ENCODE measurements at regions of chr11 and their contacts with region 1.

Region 1: DNA sequence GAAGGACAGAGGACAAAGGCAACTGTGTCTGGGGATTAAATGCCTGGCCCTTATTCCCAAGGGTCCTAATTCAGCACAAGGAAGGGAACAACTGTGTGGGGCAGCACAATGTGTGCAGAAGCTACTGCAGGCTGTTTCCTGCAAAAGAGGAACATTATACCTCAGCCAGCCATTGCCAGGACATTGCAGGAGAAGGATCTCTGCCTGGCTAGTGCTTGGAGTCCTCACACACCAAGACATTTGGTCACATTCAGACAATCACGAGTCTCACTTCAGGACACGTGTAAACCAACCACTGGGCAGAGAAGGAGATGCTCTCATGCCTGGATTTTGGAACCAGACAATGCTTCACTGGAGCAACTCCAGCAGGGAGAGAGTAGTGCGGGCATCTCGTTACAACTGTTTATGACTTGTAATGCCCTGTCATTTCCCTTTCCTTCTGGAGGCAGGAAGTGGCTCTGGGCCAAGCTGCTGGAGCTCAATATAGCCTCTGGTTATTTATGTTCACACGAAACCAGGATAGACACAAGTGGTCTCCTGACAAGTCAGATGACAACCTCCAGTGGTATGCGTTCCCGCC is 23.9 kb upstream of the ZC3H12C start:
- DNase-seq: peak; percentile 70 to 91
- ATAC-seq: peak; percentile 94 to 97
- H3K4me3 ChIP-seq: peak overlapping the region in 2 of 4 donors; percentile 7 to 9
- H3K27ac ChIP-seq: peak overlapping the region; percentile 64 to 85 (median 78)
- H3K4me1 ChIP-seq: peaks cover 21% of the 10 kb centered on the region in 2 donors
- H3K27me3 ChIP-seq: no peaks in the 10 kb centered on the region
- CTCF ChIP-seq: no peak
- POLR2A ChIP-seq: peak in 1 of 2 donors; percentile 31

Region 2: GRCh38 chr11:109960831-109961230 is 108.4 kb before region 1 on chr11:
- in situ Hi-C with region 1: no loop called
- intact Hi-C with region 1: no loop called
- DNase-seq: peak; percentile 37 to 67
- ATAC-seq: peak; percentile 82 to 91
- H3K4me3 ChIP-seq: no peak overlapping the region
- H3K27ac ChIP-seq: peak overlapping the region in 1 of 4 donors; percentile 40
- H3K4me1 ChIP-seq: peaks cover 12 to 16% of the 10 kb centered on the region in 2 donors
- H3K27me3 ChIP-seq: no peaks in the 10 kb centered on the region
- CTCF ChIP-seq: no peak
- POLR2A ChIP-seq: no peak

Region 3: DNA sequence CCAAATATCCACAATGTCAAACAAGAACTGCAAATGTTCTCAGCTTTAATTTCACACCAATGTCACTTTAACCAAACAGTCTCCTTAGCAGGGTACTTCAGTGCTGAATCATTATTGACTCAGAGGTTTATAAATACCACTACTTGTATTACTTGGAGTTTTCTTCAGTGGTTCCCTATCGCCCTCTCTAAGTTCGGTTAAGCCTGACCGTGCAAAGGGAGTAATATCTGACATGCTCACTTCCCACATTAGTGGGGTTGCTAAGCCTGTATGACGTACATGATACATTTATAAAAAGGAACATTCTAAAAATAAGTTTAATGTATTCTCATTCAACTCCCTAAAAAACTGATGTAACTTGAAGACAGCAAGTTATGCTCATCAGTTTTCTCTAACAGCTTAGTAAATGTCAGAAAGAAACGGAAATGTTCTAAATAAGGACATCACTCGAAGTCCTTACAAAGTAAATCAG is 69.2 kb before region 1 on chr11:
- in situ Hi-C with region 1: no loop called
- intact Hi-C with region 1: loop called (anchors 5 kb)
- DNase-seq: peak in 1 of 2 donors; percentile 20
- ATAC-seq: peak; percentile 100
- H3K4me3 ChIP-seq: no peak overlapping the region
- H3K27ac ChIP-seq: peak overlapping the region; percentile 60 to 80 (median 75)
- H3K4me1 ChIP-seq: peaks cover 0 to 19% of the 10 kb centered on the region in 2 donors
- H3K27me3 ChIP-seq: no peaks in the 10 kb centered on the region
- CTCF ChIP-seq: no peak
- POLR2A ChIP-seq: no peak

Measured in gastrocnemius medialis (tissue), 4 donors.